ENCODE measurements at regions of chr2 and their contacts with region 1.

Region 1: GRCh38 chr2:178914259-178914849 is 107.1 kb upstream of the TTN start:
- DNase-seq: peak; percentile 89
- H3K4me3 Mint-ChIP-seq: no peak overlapping the region
- H3K27ac Mint-ChIP-seq: no peak overlapping the region
- H3K4me1 Mint-ChIP-seq: peaks cover 7% of the 10 kb centered on the region
- H3K27me3 Mint-ChIP-seq: no peaks in the 10 kb centered on the region

Region 2: DNA sequence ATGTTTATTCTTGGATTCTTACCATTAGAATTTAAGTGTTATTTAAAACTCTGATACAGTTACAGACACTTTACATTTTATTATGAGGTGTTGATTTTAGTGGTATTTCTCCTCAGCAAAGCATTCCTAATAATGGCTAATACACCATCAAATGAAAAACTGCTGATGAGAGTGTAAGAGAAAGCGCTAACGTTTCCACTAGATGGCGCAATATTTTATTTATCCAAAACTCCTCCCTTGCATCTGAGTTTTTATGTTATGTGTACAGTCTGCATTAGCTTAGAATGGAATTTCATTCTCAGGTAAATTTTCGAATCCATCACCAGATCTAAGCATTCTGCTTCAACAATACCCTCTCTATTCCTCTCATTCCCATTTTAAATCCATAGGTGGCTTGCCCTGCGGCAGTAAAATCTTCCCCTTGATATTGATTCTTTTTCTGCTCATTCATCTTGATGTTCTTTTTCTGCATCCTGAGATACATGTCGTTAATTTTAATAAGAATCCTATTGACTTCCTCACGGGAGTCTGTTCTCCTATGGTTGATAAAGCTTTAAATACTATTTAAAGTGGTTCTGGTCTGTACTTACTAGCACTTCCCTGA is 517.2 kb before region 1 on chr2:
- CTCF ChIA-PET with region 1: no interaction called
- intact Hi-C with region 1: loop called (anchors 2 kb)
- DNase-seq: no peak
- H3K4me3 Mint-ChIP-seq: no peak overlapping the region
- H3K27ac Mint-ChIP-seq: no peak overlapping the region
- H3K4me1 Mint-ChIP-seq: no peaks in the 10 kb centered on the region
- H3K27me3 Mint-ChIP-seq: no peaks in the 10 kb centered on the region

Region 3: DNA sequence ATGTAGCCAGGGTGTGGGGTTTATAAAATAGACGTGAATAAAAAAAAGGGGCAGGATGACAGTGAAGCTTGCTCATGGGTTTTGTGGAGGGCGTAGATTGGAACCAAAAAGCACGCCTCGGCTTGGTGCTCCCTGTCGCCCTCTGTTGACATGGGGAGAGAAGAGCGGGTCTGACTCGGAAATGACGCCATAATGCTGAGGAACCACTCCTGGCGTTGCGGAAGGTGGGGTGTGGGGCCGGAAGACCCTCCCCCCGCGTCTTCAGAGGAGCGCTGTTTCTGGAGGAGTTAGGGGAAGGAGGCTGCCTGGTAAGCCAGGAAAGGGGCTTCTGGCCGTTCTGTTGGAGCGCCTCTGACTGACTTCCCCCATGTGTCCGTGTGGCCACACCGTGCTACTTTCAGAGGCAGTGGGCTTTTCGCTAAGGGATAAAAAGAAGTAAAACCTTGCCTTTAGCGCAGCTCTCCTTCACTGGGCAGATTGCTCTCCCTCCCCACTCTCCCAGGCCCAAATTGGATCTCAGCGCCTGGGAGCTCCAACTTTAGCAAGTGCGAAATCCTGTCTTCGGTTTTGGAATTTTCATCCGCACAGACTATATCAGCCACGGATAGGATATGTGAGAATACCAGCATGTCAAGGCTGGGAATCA is 391.3 kb before region 1 on chr2:
- CTCF ChIA-PET with region 1: no interaction called
- intact Hi-C with region 1: loop called (anchors 5 kb)
- DNase-seq: peak; percentile 92
- H3K4me3 Mint-ChIP-seq: peak overlapping the region; percentile 82
- H3K27ac Mint-ChIP-seq: peak overlapping the region; percentile 87
- H3K4me1 Mint-ChIP-seq: peaks cover 48% of the 10 kb centered on the region
- H3K27me3 Mint-ChIP-seq: no peaks in the 10 kb centered on the region

Region 4: GRCh38 chr2:178761759-178762371 is 152.5 kb before region 1 on chr2:
- CTCF ChIA-PET with region 1: interaction called, 6 read pairs
- intact Hi-C with region 1: loop called (anchors 1 kb)
- DNase-seq: peak; percentile 51
- H3K4me3 Mint-ChIP-seq: no peak overlapping the region
- H3K27ac Mint-ChIP-seq: no peak overlapping the region
- H3K4me1 Mint-ChIP-seq: no peaks in the 10 kb centered on the region
- H3K27me3 Mint-ChIP-seq: no peaks in the 10 kb centered on the region

Region 5: GRCh38 chr2:178796079-178796677 is 118.2 kb before region 1 on chr2:
- CTCF ChIA-PET with region 1: interaction called, 4 read pairs
- intact Hi-C with region 1: loop called (anchors 1 kb)
- DNase-seq: no peak
- H3K4me3 Mint-ChIP-seq: no peak overlapping the region
- H3K27ac Mint-ChIP-seq: no peak overlapping the region
- H3K4me1 Mint-ChIP-seq: no peaks in the 10 kb centered on the region
- H3K27me3 Mint-ChIP-seq: no peaks in the 10 kb centered on the region

Region 6: DNA sequence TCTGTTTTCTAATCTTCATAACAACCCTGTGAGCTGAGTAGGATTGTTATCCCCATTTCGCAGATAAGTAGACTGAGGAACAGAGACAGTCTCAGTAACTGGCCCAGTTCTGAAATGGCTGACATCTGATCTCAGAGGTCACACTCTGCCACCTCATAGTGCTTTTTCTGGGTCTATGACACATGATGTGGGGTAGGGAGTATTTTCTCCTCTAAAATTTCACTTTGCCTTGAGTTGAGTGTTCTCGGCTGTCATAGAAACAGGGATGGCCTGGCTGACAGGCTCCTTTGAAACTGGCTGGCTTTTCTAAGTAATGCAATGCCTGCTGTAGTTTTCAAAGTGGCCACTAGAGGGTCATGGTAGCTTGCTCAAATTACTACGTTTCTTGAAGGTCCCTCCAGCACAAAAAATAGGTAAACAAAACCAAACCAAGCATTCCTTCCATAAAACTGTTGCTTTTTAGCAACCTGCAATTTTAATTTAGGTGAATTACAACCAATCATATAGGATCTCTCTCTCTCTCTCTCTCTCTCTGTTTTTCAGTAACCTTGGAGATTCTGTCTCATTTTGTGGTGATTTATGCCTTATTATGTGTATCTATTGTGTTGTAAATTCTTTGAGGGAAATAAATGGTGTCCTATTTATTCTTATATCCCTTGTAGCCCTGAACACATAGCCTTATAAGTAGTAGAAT is 22.9 kb before region 1 on chr2:
- CTCF ChIA-PET with region 1: interaction called, 13 read pairs
- intact Hi-C with region 1: loop called (anchors 1 kb)
- DNase-seq: peak; percentile 82
- H3K4me3 Mint-ChIP-seq: no peak overlapping the region
- H3K27ac Mint-ChIP-seq: no peak overlapping the region
- H3K4me1 Mint-ChIP-seq: peaks cover 9% of the 10 kb centered on the region
- H3K27me3 Mint-ChIP-seq: no peaks in the 10 kb centered on the region